Activated CD4-positive, alpha-beta T cell treated with anti-CD3 and anti-CD28 coated beads for 36 hours (primary cell): ENCODE measurements at regions of chr10 and their contacts with region 1.

Region 1: DNA sequence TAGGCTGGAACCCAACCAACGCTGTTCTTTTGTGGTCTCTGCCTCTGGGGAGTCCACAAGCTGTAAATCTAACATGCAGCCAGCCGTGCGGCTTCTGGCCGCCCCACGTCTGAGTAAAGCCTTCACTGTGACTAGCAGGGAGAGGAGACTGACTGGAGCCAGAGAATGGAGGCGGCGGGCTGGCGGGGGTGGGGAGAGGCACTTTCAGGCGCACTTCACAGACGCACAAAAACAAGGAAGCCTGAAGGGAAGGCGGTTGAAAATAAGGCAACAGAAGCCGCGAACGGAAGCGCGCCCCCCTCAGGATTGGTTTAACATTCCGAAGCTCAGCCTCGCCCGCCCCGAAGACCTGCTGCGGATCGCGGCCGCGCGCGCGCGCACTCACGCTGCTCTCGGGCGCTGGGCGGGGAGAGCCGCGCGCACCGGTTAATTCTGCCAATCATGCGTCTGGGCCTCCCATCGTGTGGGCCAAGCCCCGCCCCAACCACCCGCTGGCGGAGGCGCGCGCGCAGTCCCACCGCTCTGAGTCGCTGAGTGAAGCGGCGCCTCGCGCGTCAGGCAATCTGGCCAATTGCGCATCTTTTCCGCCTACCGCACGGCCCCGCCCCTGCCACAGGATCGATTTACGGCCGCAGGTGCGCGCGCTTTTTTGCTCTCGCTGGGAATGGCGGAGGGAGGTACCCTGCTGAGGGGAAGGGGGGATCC is at the start of gene SFR1:
- DNase-seq: peak; percentile 99
- ATAC-seq: peak; percentile 93
- H3K4me3 Mint-ChIP-seq: peak within 1 kb of the TSS; percentile 91
- H3K27ac Mint-ChIP-seq: peak within 1 kb of the TSS; percentile 97
- H3K4me1 Mint-ChIP-seq: peaks cover 47% of the 10 kb centered on the region
- H3K27me3 Mint-ChIP-seq: no peaks in the 10 kb centered on the region
- total RNA-seq, gene SFR1: 17.2 to 20.5 TPM

Region 2: DNA sequence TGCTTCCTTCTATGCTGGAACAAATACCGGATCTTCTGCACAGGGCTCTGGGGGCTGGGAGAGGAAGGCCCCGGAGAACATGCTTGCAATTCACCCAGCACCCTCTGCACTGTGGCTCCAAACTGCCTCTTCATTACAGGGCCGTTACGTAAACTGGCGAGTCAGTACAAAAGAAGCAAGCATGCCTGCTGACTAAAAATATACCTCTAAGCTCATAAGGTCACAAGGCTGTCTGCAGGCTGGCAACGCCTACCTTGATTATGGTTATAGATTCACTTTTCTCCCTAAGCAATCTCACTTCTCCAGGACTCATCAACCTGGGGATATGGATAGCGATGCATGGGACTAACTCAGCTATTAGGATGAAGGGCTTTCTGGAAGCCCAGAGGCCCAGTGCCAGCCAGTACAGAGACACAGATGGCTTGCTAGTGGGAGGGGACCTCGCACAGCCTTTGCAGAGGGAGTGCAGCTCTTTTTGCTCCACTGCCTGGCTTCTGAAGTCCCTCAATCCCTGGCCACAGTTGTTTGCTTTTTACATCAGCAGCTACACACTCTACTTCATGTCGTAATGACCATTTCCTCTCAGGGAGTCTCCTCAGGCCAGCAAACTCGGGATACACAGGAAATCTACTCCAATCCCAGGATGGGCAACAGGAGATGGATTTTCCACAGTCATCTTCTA is 362.4 kb before region 1 on chr10:
- CTCF ChIA-PET with region 1: no interaction called
- POLR2A ChIA-PET with region 1: no interaction called
- intact Hi-C with region 1: loop called in 1 of 2 experiments (anchors 2 kb)
- DNase-seq: peak; percentile 73
- ATAC-seq: peak; percentile 83
- H3K4me3 Mint-ChIP-seq: peak overlapping the region; percentile 11
- H3K27ac Mint-ChIP-seq: peak overlapping the region; percentile 51
- H3K4me1 Mint-ChIP-seq: peaks cover 47% of the 10 kb centered on the region
- H3K27me3 Mint-ChIP-seq: no peaks in the 10 kb centered on the region

Region 3: DNA sequence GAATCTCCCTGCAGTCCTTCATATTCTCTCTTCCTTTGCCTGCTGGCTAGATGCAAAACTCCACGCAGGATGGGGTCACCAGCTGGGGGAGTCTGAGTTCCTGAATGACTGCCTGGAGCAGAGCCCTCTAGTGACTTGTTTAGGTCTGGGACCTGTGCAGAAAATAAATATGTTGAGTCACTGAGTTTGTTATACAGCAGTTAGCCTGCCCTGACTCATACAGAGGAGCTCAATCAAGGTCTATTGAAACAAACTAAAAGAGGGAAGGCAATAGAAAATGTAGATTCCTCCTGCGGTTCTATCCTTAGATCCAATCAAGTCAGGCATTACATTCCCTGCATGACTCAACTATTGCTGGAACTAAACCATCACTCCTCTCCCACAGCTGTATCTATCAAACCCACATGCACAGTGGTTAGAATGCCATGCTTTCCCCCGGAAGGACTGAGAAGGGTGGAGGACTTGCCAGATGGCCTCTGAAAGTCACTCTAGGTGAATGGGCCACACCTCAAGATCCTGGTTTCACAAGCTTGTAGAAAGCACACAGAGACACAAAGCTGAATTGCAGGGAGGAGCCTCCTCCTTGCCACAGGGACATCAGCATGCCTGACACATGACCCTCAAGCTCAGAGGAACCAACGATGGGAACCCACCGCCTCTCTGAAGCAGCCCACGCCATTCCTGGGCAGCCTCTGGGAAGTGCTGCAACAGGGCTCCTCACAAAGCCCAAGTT is 340.2 kb before region 1 on chr10:
- CTCF ChIA-PET with region 1: no interaction called
- POLR2A ChIA-PET with region 1: no interaction called
- intact Hi-C with region 1: no loop called
- DNase-seq: peak; percentile 33
- ATAC-seq: peak; percentile 90
- H3K4me3 Mint-ChIP-seq: no peak overlapping the region
- H3K27ac Mint-ChIP-seq: no peak overlapping the region
- H3K4me1 Mint-ChIP-seq: peaks cover 3% of the 10 kb centered on the region
- H3K27me3 Mint-ChIP-seq: peaks cover 11% of the 10 kb centered on the region

Region 4: GRCh38 chr10:103966671-103967447 is 154.8 kb before region 1 on chr10 and contains the start of gene SLK:
- CTCF ChIA-PET with region 1: interaction called, 5 read pairs
- POLR2A ChIA-PET with region 1: interaction called, 7 read pairs
- intact Hi-C with region 1: loop called (anchors 1 kb)
- DNase-seq: peak; percentile 90
- ATAC-seq: peak; percentile 82
- H3K4me3 Mint-ChIP-seq: peak within 1 kb of the TSS; percentile 97
- H3K27ac Mint-ChIP-seq: peak within 1 kb of the TSS; percentile 95
- H3K4me1 Mint-ChIP-seq: peaks cover 30% of the 10 kb centered on the region
- H3K27me3 Mint-ChIP-seq: no peaks in the 10 kb centered on the region
- total RNA-seq, gene SLK: 20.2 to 32.5 TPM

Region 5: GRCh38 chr10:104099274-104099673 is 22.4 kb before region 1 on chr10:
- CTCF ChIA-PET with region 1: interaction called, 10 read pairs
- POLR2A ChIA-PET with region 1: no interaction called
- intact Hi-C with region 1: no loop called
- DNase-seq: no peak
- ATAC-seq: no peak
- H3K4me3 Mint-ChIP-seq: no peak overlapping the region
- H3K27ac Mint-ChIP-seq: no peak overlapping the region
- H3K4me1 Mint-ChIP-seq: peaks cover 4% of the 10 kb centered on the region
- H3K27me3 Mint-ChIP-seq: peaks cover 2% of the 10 kb centered on the region

Region 6: DNA sequence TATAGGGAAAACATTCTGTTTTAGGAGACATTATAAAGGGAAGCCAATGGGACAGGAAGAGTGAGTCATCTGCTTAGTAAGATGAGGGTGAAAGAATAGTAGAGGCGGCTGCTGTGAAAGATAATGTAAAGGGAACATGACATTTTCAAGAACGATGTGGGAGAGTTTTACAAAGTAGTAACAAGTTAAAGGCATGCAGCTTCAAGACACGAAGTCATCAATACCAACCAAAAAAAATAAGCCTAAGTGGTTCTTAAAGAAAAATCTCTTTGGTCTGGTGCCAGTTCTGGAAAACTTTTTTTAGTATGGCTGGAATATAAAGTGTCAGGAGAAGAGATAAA is 139.1 kb after region 1 on chr10:
- CTCF ChIA-PET with region 1: interaction called, 4 read pairs
- POLR2A ChIA-PET with region 1: interaction called, 5 read pairs
- intact Hi-C with region 1: loop called in 1 of 2 experiments (anchors 2 kb)
- DNase-seq: no peak
- ATAC-seq: peak; percentile 77
- H3K4me3 Mint-ChIP-seq: peak overlapping the region; percentile 59
- H3K27ac Mint-ChIP-seq: peak overlapping the region; percentile 89
- H3K4me1 Mint-ChIP-seq: peaks cover 84% of the 10 kb centered on the region
- H3K27me3 Mint-ChIP-seq: no peaks in the 10 kb centered on the region